Endothelial cell of umbilical vein (primary cell): ENCODE measurements at regions of chr5 and their contacts with region 1.

Region 1: DNA sequence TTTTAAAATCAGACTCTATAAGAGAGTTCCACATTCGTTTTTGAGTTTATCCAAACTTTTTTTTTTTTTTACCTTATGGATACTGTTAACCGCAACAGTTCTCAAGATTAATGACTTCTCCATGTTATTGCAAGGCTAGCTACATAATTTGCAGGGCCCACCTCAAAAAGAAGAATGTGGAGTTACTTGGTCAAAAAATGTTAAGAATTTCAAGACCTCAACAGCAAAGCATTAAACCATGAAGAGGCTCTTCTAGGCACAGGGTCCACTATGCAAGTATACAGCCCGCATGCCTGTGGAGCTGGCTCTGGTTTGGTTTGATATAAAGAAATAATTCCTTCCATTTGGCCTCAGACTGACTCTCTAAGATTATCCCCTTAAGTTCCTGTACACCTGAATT is 133.3 kb upstream of the TLX3 start:
- DNase-seq: no peak
- H3K4me3 ChIP-seq: no peak overlapping the region
- H3K27ac ChIP-seq: no peak overlapping the region
- H3K4me1 ChIP-seq: no peaks in the 10 kb centered on the region
- H3K27me3 ChIP-seq: no peaks in the 10 kb centered on the region
- CTCF ChIP-seq: no peak
- POLR2A ChIP-seq: no peak

Region 2: GRCh38 chr5:171162602-171163001 is 13.1 kb before region 1 on chr5:
- CTCF ChIA-PET with region 1: interaction called, 11 read pairs
- POLR2A ChIA-PET with region 1: no interaction called
- dilution Hi-C with region 1: no loop called
- intact Hi-C with region 1: no loop called
- DNase-seq: peak; percentile 91
- H3K4me3 ChIP-seq: no peak overlapping the region
- H3K27ac ChIP-seq: peak overlapping the region; percentile 2
- H3K4me1 ChIP-seq: peaks cover 12% of the 10 kb centered on the region
- H3K27me3 ChIP-seq: no peaks in the 10 kb centered on the region
- CTCF ChIP-seq: peak; percentile 51 to 71
- POLR2A ChIP-seq: no peak